ENCODE measurements at regions of chr13 and their contacts with region 1.

Region 1: DNA sequence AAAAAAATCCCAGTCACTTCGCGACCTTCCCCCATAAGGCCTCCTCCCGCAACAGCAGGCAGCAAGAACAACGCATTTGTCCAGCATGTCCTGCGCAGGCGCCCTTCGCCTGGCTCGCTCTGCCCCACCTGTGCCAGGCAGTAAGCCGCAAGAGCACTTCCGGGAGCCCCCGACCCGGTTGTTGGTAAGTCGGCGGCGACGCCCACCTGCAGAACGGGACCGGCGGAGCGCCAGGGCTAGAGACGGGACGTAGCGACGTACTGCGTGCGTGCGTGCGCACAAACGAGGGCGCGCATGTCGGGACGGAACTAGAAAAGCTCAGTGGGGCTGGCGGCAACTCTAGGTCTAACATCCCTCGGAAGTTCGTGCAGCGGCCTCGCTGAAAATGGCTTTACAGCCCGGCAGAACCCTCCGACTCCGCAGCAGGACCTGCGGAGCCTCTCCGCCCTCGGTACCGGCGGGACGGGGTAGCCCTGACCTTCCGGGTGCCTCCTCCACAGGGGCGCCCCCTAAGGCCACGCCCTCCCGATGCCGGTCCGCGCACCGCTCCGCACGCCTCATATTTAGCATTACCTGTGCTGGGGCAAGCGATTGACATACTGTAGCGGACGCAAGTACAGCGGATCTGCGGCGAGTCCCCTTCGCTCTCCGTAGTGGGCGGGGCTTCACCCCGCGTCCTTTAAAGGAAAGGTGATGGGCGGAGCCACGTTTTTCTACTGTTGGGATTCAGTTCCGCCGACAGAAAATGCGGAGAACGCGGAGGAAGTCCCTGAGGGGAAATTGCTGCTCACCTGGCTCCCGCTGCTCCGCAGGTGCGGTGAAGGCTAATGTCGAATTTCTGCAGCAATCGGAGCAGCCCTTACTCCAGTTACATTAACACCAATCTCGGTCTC is at the start of gene MTIF3:
- DNase-seq: peak; percentile 90 to 99 (median 98)
- ATAC-seq: peak; percentile 89
- H3K4me3 ChIP-seq: peak within 1 kb of the TSS; percentile 82
- H3K4me3 Mint-ChIP-seq: peak within 1 kb of the TSS; percentile 89 to 96 (median 94)
- H3K27ac ChIP-seq: peak within 1 kb of the TSS; percentile 96
- H3K27ac Mint-ChIP-seq: peak within 1 kb of the TSS; percentile 94 to 100 (median 98)
- H3K4me1 ChIP-seq: peaks cover 35 to 41% of the 10 kb centered on the region in 2 donors
- H3K4me1 Mint-ChIP-seq: peaks cover 45 to 75% (median 56%) of the 10 kb centered on the region in 7 donors
- H3K27me3 ChIP-seq: no peaks in the 10 kb centered on the region
- H3K27me3 Mint-ChIP-seq: no peaks in the 10 kb centered on the region
- total RNA-seq, gene MTIF3: 28.4 to 89.6 (median 51.3) TPM

Region 2: DNA sequence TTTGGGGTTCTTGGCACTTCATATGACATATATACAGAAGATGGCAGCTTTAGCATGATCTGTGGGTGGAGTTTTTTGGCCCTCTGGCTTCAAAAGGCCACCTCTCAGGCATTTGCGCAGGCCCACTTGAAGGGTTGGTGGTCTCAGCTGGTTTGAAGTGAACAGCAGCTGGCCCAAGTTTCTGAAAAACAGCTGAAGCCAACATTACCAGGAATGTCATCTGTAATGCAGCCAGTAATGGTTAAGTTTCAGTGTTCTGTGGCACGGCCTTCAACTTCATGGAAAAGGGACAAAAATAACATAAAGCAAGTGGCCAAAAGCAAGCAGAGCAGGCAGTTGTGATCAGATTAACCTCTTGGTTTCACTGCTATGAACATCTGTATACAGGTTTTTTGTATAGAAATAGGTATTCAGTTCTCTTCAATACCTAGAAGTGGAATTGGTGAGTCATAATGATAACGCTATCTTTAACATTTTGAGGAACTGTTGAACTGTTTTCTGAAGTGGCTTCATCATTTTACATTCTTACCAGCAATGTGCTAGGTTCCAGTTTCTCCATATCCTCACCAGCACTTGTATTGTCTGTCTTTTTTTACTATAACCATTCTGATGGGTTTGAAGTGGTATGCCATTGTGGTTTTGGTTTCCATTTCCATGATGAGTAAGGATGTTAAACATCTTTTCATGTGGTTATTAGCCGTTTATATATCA is 1643.8 kb before region 1 on chr13:
- CTCF ChIA-PET with region 1: no interaction called
- POLR2A ChIA-PET with region 1: no interaction called
- intact Hi-C with region 1: no loop called
- DNase-seq: no peak
- ATAC-seq: no peak
- H3K4me3 ChIP-seq: no peak overlapping the region
- H3K4me3 Mint-ChIP-seq: peak overlapping the region in 1 of 10 donors; percentile 37
- H3K27ac ChIP-seq: no peak overlapping the region
- H3K27ac Mint-ChIP-seq: peak overlapping the region in 1 of 9 donors; percentile 82
- H3K4me1 ChIP-seq: no peaks in the 10 kb centered on the region
- H3K4me1 Mint-ChIP-seq: peaks cover 0 to 22% (median 0%) of the 10 kb centered on the region in 7 donors
- H3K27me3 ChIP-seq: no peaks in the 10 kb centered on the region
- H3K27me3 Mint-ChIP-seq: peaks cover 0 to 15% (median 5%) of the 10 kb centered on the region in 5 donors

Region 3: GRCh38 chr13:26253787-26254582 is 1196.2 kb before region 1 on chr13 and contains the start of gene CDK8:
- CTCF ChIA-PET with region 1: no interaction called
- POLR2A ChIA-PET with region 1: no interaction called
- intact Hi-C with region 1: loop called in 1 of 2 experiments (anchors 1 kb)
- DNase-seq: peak; percentile 83 to 95 (median 93)
- ATAC-seq: peak; percentile 92
- H3K4me3 ChIP-seq: peak within 1 kb of the TSS; percentile 95
- H3K4me3 Mint-ChIP-seq: peak within 1 kb of the TSS; percentile 83 to 98 (median 94)
- H3K27ac ChIP-seq: peak within 1 kb of the TSS; percentile 85
- H3K27ac Mint-ChIP-seq: peak within 1 kb of the TSS; percentile 82 to 93 (median 90)
- H3K4me1 ChIP-seq: peaks cover 17% of the 10 kb centered on the region in 2 donors
- H3K4me1 Mint-ChIP-seq: peaks cover 25 to 50% (median 41%) of the 10 kb centered on the region in 7 donors
- H3K27me3 ChIP-seq: no peaks in the 10 kb centered on the region
- H3K27me3 Mint-ChIP-seq: peaks cover 0 to 2% (median 0%) of the 10 kb centered on the region in 5 donors
- total RNA-seq, gene CDK8: 9.0 to 14.0 (median 11.6) TPM

Region 4: GRCh38 chr13:27086599-27087265 is 363.4 kb before region 1 on chr13:
- CTCF ChIA-PET with region 1: no interaction called
- POLR2A ChIA-PET with region 1: no interaction called
- intact Hi-C with region 1: no loop called
- DNase-seq: no peak
- ATAC-seq: no peak
- H3K4me3 ChIP-seq: no peak overlapping the region
- H3K4me3 Mint-ChIP-seq: no peak overlapping the region
- H3K27ac ChIP-seq: no peak overlapping the region
- H3K27ac Mint-ChIP-seq: no peak overlapping the region
- H3K4me1 ChIP-seq: no peaks in the 10 kb centered on the region
- H3K4me1 Mint-ChIP-seq: peaks cover 0 to 13% (median 2%) of the 10 kb centered on the region in 7 donors
- H3K27me3 ChIP-seq: no peaks in the 10 kb centered on the region
- H3K27me3 Mint-ChIP-seq: no peaks in the 10 kb centered on the region

Region 5: GRCh38 chr13:27171827-27172494 is 278.2 kb before region 1 on chr13:
- CTCF ChIA-PET with region 1: no interaction called
- POLR2A ChIA-PET with region 1: no interaction called
- intact Hi-C with region 1: loop called (anchors 1 kb)
- DNase-seq: peak; percentile 82 to 91 (median 88)
- ATAC-seq: peak; percentile 94
- H3K4me3 ChIP-seq: peak overlapping the region; percentile 58
- H3K4me3 Mint-ChIP-seq: peak overlapping the region; percentile 78 to 96 (median 88)
- H3K27ac ChIP-seq: peak overlapping the region; percentile 85
- H3K27ac Mint-ChIP-seq: peak overlapping the region; percentile 76 to 95 (median 88)
- H3K4me1 ChIP-seq: peaks cover 24 to 34% of the 10 kb centered on the region in 2 donors
- H3K4me1 Mint-ChIP-seq: peaks cover 23 to 49% (median 44%) of the 10 kb centered on the region in 7 donors
- H3K27me3 ChIP-seq: no peaks in the 10 kb centered on the region
- H3K27me3 Mint-ChIP-seq: no peaks in the 10 kb centered on the region

Region 6: DNA sequence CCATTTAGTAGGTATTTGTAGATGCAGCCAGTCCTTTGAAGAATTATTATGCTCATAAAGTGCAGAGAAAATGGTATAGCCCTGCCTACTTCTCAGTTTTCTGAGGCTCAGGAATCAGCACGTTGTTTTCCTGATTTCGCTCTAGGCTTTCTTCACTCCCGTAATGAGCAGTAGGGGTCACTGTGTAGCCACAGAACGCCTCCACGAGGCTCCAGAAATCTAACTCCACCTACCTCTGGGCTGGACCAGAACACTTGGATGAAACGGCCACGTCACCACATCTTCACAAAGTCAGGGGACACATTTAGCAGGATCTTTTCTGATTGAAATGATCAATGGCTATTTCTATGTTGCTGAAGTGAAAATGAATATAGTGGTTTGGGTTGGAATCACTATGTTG is 75.5 kb before region 1 on chr13:
- CTCF ChIA-PET with region 1: no interaction called
- POLR2A ChIA-PET with region 1: no interaction called
- intact Hi-C with region 1: loop called in 1 of 2 experiments (anchors 1 kb)
- DNase-seq: peak; percentile 16 to 57 (median 46)
- ATAC-seq: peak; percentile 92
- H3K4me3 ChIP-seq: no peak overlapping the region
- H3K4me3 Mint-ChIP-seq: peak overlapping the region in 1 of 10 donors; percentile 19
- H3K27ac ChIP-seq: no peak overlapping the region
- H3K27ac Mint-ChIP-seq: no peak overlapping the region
- H3K4me1 ChIP-seq: no peaks in the 10 kb centered on the region
- H3K4me1 Mint-ChIP-seq: peaks cover 0 to 17% (median 4%) of the 10 kb centered on the region in 7 donors
- H3K27me3 ChIP-seq: no peaks in the 10 kb centered on the region
- H3K27me3 Mint-ChIP-seq: peaks cover 10 to 26% (median 17%) of the 10 kb centered on the region in 5 donors

Region 7: GRCh38 chr13:27424246-27425157 is 25.7 kb before region 1 on chr13 and contains the start of gene GTF3A:
- CTCF ChIA-PET with region 1: interaction called, 38 read pairs
- POLR2A ChIA-PET with region 1: interaction called, 477 read pairs
- intact Hi-C with region 1: loop called (anchors 1 kb)
- DNase-seq: peak; percentile 83 to 97 (median 93)
- ATAC-seq: peak; percentile 77
- H3K4me3 ChIP-seq: peak within 1 kb of the TSS; percentile 71
- H3K4me3 Mint-ChIP-seq: peak within 1 kb of the TSS; percentile 81 to 96 (median 92)
- H3K27ac ChIP-seq: peak within 1 kb of the TSS; percentile 86
- H3K27ac Mint-ChIP-seq: peak within 1 kb of the TSS; percentile 88 to 98 (median 95)
- H3K4me1 ChIP-seq: peaks cover 24 to 45% of the 10 kb centered on the region in 2 donors
- H3K4me1 Mint-ChIP-seq: peaks cover 27 to 47% (median 42%) of the 10 kb centered on the region in 7 donors
- H3K27me3 ChIP-seq: no peaks in the 10 kb centered on the region
- H3K27me3 Mint-ChIP-seq: no peaks in the 10 kb centered on the region
- total RNA-seq, gene GTF3A: 123 to 254 (median 206) TPM

Region 8: DNA sequence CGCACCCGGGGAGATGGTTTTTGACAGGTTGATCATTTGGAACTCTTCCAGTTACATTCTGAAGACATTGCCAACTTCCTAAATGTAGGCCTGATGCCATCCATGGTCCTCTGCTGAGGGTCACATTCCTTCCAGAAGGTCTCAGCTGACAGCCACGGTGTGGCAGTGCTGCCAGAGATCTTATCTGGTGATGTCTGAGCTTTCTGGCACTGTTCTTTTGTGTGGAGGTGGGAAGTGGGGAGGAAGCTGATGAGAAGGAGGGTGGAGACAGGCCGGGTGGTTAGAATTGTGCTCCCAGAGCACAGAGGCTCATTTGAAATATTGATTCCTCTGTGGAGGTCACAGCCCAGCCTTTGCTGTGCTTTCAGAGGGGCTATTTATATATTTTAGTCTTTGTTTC is 16.3 kb after region 1 on chr13:
- CTCF ChIA-PET with region 1: no interaction called
- POLR2A ChIA-PET with region 1: interaction called, 3 read pairs
- intact Hi-C with region 1: loop called in 1 of 2 experiments (anchors 1 kb)
- DNase-seq: no peak
- ATAC-seq: no peak
- H3K4me3 ChIP-seq: no peak overlapping the region
- H3K4me3 Mint-ChIP-seq: peak overlapping the region in 3 of 10 donors; percentile 48 to 56 (median 52)
- H3K27ac ChIP-seq: no peak overlapping the region
- H3K27ac Mint-ChIP-seq: peak overlapping the region in 4 of 9 donors; percentile 23 to 78 (median 54)
- H3K4me1 ChIP-seq: no peaks in the 10 kb centered on the region
- H3K4me1 Mint-ChIP-seq: peaks cover 0 to 14% (median 8%) of the 10 kb centered on the region in 7 donors
- H3K27me3 ChIP-seq: no peaks in the 10 kb centered on the region
- H3K27me3 Mint-ChIP-seq: peaks cover 0 to 6% (median 0%) of the 10 kb centered on the region in 5 donors

Region 9: GRCh38 chr13:27704681-27705080 is 254.5 kb after region 1 on chr13:
- CTCF ChIA-PET with region 1: no interaction called
- POLR2A ChIA-PET with region 1: no interaction called
- intact Hi-C with region 1: loop called in 1 of 2 experiments (anchors 10 kb)
- DNase-seq: no peak
- ATAC-seq: no peak
- H3K4me3 ChIP-seq: no peak overlapping the region
- H3K4me3 Mint-ChIP-seq: peak overlapping the region in 2 of 10 donors; percentile 26 to 43
- H3K27ac ChIP-seq: no peak overlapping the region
- H3K27ac Mint-ChIP-seq: no peak overlapping the region
- H3K4me1 ChIP-seq: peaks cover 0 to 3% of the 10 kb centered on the region in 2 donors
- H3K4me1 Mint-ChIP-seq: peaks cover 0 to 13% (median 5%) of the 10 kb centered on the region in 7 donors
- H3K27me3 ChIP-seq: no peaks in the 10 kb centered on the region
- H3K27me3 Mint-ChIP-seq: peaks cover 18 to 45% (median 23%) of the 10 kb centered on the region in 5 donors

Measured in naive thymus-derived CD4-positive, alpha-beta T cell (primary cell).